A549 (cell line): ENCODE measurements at regions of chr5 and their contacts with region 1.

Region 1: GRCh38 chr5:119274767-119275130 is 81.1 kb upstream of the TNFAIP8 start:
- DNase-seq: no peak
- ATAC-seq: peak; percentile 45 to 52; a peak in 3 of 6 replicates
- H3K4me3 ChIP-seq: no peak overlapping the region
- H3K27ac ChIP-seq: peak overlapping the region; percentile 39 to 74; a peak in 5 of 6 replicates
- H3K4me1 ChIP-seq: peaks cover 63% of the 10 kb centered on the region
- CTCF ChIP-seq: no peak
- EP300 ChIP-seq: no peak
- POLR2A ChIP-seq: no peak
- RAD21 ChIP-seq: no peak

Region 2: GRCh38 chr5:119315516-119315949 is 40.8 kb after region 1 on chr5:
- CTCF ChIA-PET with region 1: interaction called, 10 read pairs
- POLR2A ChIA-PET with region 1: no interaction called
- DNase-seq: peak; percentile 67 to 70
- ATAC-seq: peak; percentile 91 to 94
- H3K4me3 ChIP-seq: no peak overlapping the region
- H3K27ac ChIP-seq: peak overlapping the region; percentile 32 to 77; a peak in 4 of 6 replicates
- H3K4me1 ChIP-seq: peaks cover 32% of the 10 kb centered on the region
- CTCF ChIP-seq: peak; percentile 28; the same call in 2 of the 3 replicates
- EP300 ChIP-seq: no peak
- POLR2A ChIP-seq: no peak
- RAD21 ChIP-seq: peak; percentile 46 to 50; a peak in 2 of 5 replicates